Aorta (tissue), 5 donors: ENCODE measurements at regions of chr13 and their contacts with region 1.

Region 1: DNA sequence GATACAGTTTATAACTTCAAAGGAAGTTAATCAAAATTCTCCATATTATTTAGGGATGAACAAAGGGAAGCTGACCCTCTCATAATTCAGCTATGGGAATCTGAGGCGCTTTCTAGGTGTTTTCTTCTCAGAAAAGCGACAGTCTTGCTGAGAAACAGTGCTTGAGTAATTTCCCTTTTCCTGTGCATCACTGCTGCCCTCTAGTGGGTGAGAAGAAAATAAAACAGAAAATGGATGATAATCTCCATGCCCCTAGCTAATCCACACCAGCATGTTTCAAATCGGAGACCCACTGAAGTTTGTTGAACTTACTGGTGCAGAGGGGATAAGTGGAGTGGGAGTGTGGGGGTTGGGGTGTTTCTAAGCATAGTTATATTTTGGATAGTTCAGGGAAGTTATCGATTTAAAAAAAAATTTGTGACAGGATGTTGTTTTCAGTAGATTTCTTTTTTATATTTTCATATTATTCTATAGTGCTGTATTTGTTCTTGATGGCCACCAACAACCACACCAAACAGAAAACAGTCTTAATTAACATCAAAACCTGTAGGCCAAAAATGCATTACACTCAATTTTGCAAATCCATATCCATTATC is 21.4 kb downstream of the LCP1 start:
- DNase-seq: no peak
- ATAC-seq: peak; percentile 64
- H3K4me3 ChIP-seq: no peak overlapping the region
- H3K27ac ChIP-seq: no peak overlapping the region
- H3K4me1 ChIP-seq: no peaks in the 10 kb centered on the region
- H3K27me3 ChIP-seq: no peaks in the 10 kb centered on the region

Region 2: GRCh38 chr13:45695198-45695730 is 465.3 kb before region 1 on chr13:
- intact Hi-C with region 1: no loop called
- DNase-seq: no peak
- ATAC-seq: no peak
- H3K4me3 ChIP-seq: no peak overlapping the region
- H3K27ac ChIP-seq: no peak overlapping the region
- H3K4me1 ChIP-seq: no peaks in the 10 kb centered on the region
- H3K27me3 ChIP-seq: peaks cover 0 to 5% of the 10 kb centered on the region in 2 donors

Region 3: GRCh38 chr13:45817833-45818232 is 342.7 kb before region 1 on chr13:
- intact Hi-C with region 1: no loop called
- DNase-seq: no peak
- ATAC-seq: no peak
- H3K4me3 ChIP-seq: no peak overlapping the region
- H3K27ac ChIP-seq: no peak overlapping the region
- H3K4me1 ChIP-seq: no peaks in the 10 kb centered on the region
- H3K27me3 ChIP-seq: no peaks in the 10 kb centered on the region

Region 4: GRCh38 chr13:46321494-46322225 is 161.1 kb after region 1 on chr13:
- intact Hi-C with region 1: loop called in 1 of 2 experiments (anchors 10 kb)
- DNase-seq: peak; percentile 66 to 82
- ATAC-seq: no peak
- H3K4me3 ChIP-seq: no peak overlapping the region
- H3K27ac ChIP-seq: no peak overlapping the region
- H3K4me1 ChIP-seq: no peaks in the 10 kb centered on the region
- H3K27me3 ChIP-seq: no peaks in the 10 kb centered on the region

Region 5: GRCh38 chr13:46403851-46404732 is 243.5 kb after region 1 on chr13:
- intact Hi-C with region 1: no loop called
- DNase-seq: no peak
- ATAC-seq: no peak
- H3K4me3 ChIP-seq: no peak overlapping the region
- H3K27ac ChIP-seq: no peak overlapping the region
- H3K4me1 ChIP-seq: no peaks in the 10 kb centered on the region
- H3K27me3 ChIP-seq: no peaks in the 10 kb centered on the region